Activated CD4-positive, alpha-beta T cell treated with anti-CD3 and anti-CD28 coated beads, Interleukin-2, amount 10 ng/mL, durations not matched to agents 7 days and 5 days (primary cell): ENCODE measurements at regions of chr1 and their contacts with region 1.

Region 1: DNA sequence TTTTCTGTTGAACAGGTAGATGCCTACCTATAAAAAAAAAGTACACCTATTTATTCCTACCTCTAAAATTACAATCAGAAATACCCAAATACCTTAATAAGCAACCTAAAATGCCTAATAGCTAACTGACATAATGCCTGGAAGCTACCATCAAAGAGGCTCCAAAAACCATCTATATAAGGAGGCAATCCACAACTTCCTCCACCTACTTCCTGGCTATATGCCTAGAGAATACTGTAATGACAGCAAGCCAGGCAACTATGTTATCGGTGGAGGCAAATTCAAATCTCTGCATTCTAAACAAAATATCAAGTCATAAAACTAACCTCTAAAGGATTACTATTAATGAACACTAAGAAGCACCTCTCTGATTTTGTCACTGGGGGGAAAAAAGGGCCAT is 10.1 kb downstream of the ZNF644 start:
- DNase-seq: no peak
- H3K4me3 Mint-ChIP-seq: no peak overlapping the region
- H3K27ac Mint-ChIP-seq: no peak overlapping the region
- H3K4me1 Mint-ChIP-seq: peaks cover 51% of the 10 kb centered on the region
- H3K27me3 Mint-ChIP-seq: no peaks in the 10 kb centered on the region

Region 2: DNA sequence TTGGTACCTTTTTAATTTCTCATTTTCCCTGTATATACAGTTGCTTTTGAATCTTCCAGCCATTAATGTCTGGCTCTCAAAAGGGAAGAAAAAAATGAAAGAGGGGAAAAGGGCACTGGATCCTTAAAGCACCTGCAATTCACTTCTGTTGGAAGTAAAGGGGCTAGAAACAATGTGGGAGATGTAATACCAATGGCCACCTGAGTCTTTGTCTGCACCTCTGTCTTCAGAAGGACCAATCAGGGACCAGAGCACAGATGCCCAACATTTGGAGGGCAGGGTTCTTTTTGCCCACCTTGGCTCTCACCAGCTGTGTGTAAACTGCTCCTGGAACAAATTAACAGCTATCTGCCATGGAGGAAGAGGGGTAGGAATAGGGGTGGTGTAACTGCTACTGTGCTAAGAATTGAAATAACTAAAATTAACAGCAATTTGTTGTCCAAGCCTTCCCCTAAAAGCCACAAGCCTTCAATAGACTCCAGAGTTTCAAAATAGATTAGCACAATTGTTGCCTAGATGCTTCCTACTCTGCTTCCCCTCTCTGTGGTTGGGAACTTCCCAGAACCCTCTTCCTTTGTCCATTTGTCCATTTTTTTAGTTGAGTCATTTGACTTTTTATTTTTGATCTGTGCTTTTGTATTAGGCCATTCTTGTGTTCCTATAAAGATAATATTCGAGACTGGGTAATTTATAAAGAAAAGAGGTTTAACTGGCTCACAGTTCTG is 1498.6 kb before region 1 on chr1:
- CTCF ChIA-PET with region 1: no interaction called
- POLR2A ChIA-PET with region 1: interaction called, 11 read pairs
- DNase-seq: no peak
- H3K4me3 Mint-ChIP-seq: no peak overlapping the region
- H3K27ac Mint-ChIP-seq: no peak overlapping the region
- H3K4me1 Mint-ChIP-seq: no peaks in the 10 kb centered on the region
- H3K27me3 Mint-ChIP-seq: no peaks in the 10 kb centered on the region